ENCODE measurements at regions of chr12 and their contacts with region 1.

Region 1: GRCh38 chr12:77725611-77726010 is 105.1 kb upstream of the NAV3 start:
- DNase-seq: peak; percentile 31
- H3K4me3 ChIP-seq: no peak overlapping the region
- CTCF ChIP-seq: no peak

Region 2: DNA sequence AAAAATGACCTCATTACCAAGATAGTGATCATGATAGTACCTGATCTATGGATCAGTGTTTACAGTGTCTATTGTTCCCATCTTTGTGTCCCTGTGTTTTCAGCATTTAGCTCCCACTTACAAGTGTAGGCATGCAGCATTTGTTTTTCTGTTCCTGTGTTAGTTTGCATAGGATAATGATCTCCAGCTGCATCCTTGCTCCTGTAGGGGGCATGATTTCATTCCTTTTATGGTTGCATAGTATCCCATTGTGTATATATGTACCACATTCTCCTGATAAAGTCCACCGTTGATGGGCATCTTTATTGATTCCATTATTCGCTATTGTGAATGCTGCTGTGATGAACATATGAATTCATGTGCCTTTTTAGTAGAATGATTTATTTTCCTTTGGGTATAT is 110.3 kb before region 1 on chr12:
- in situ Hi-C with region 1: no loop called
- DNase-seq: no peak
- H3K4me3 ChIP-seq: no peak overlapping the region
- CTCF ChIP-seq: peak; percentile 32

Region 3: GRCh38 chr12:77925536-77926108 is 200.0 kb after region 1 on chr12:
- in situ Hi-C with region 1: loop called (anchors 5 kb)
- DNase-seq: peak; percentile 95
- H3K4me3 ChIP-seq: no peak overlapping the region
- CTCF ChIP-seq: peak; percentile 99

Measured in astrocyte of the cerebellum (primary cell).